ENCODE measurements at regions of chr11 and their contacts with region 1.

Region 1: GRCh38 chr11:110907629-110908028 is 195.4 kb upstream of the ARHGAP20 start:
- DNase-seq: peak; percentile 98
- H3K4me3 ChIP-seq: no peak overlapping the region
- CTCF ChIP-seq: no peak

Region 2: GRCh38 chr11:110866091-110866490 is 41.5 kb before region 1 on chr11:
- in situ Hi-C with region 1: no loop called
- DNase-seq: no peak
- H3K4me3 ChIP-seq: no peak overlapping the region
- CTCF ChIP-seq: no peak

Region 3: DNA sequence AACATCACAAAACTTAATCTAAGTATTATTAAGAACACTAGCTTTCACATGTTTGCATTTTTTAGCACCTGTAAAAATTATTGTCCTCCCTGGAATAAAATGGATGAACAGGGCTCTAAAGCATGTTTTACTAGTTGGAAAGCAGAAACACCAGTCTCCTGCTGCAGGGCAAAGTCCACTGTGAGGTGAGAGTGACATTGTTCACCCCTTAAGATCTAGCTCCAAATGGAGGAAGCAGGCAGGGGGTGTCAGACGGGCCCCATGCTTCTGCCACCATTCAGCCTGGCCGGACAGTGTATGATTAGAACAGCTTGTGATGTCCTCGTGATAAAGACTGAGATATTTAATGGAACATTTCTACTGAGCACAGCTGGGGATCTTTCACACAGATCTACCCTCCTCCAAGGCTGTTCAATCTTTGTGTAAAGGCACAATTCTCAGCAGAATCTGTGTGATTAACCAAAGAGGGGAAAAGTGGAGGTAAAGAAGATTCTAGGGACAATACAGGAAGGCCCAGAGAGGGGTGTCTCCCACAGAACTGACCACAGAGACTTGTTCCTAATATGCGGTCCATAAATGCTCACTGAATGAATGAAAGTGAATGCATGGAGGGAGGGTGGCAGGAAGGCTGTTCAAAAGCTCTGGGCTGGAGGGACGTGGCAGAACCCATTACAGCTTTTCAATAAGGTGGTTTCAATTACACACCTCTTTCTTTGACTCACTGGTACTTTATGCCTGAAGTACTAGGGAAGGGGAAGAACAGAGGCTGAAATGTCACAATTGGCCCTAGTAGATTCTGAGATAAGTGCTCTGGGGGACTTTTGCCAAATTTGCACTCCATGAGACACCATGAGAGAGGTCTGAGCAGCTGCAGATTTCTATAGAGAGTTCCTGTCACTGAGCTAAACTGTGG is 43.7 kb after region 1 on chr11:
- in situ Hi-C with region 1: no loop called
- DNase-seq: no peak
- H3K4me3 ChIP-seq: no peak overlapping the region
- CTCF ChIP-seq: no peak

Region 4: GRCh38 chr11:111001986-111002611 is 94.5 kb after region 1 on chr11:
- in situ Hi-C with region 1: loop called (anchors 5 kb)
- DNase-seq: peak; percentile 76
- H3K4me3 ChIP-seq: no peak overlapping the region
- CTCF ChIP-seq: no peak